HAP-1 (cell line): ENCODE measurements at regions of chr20 and their contacts with region 1.

Region 1: GRCh38 chr20:9616833-9617489 is 102.6 kb downstream of the LAMP5 start:
- DNase-seq: peak; percentile 68 to 69
- H3K4me3 ChIP-seq: no peak overlapping the region
- H3K4me1 ChIP-seq: no peaks in the 10 kb centered on the region
- H3K27me3 ChIP-seq: no peaks in the 10 kb centered on the region

Region 2: DNA sequence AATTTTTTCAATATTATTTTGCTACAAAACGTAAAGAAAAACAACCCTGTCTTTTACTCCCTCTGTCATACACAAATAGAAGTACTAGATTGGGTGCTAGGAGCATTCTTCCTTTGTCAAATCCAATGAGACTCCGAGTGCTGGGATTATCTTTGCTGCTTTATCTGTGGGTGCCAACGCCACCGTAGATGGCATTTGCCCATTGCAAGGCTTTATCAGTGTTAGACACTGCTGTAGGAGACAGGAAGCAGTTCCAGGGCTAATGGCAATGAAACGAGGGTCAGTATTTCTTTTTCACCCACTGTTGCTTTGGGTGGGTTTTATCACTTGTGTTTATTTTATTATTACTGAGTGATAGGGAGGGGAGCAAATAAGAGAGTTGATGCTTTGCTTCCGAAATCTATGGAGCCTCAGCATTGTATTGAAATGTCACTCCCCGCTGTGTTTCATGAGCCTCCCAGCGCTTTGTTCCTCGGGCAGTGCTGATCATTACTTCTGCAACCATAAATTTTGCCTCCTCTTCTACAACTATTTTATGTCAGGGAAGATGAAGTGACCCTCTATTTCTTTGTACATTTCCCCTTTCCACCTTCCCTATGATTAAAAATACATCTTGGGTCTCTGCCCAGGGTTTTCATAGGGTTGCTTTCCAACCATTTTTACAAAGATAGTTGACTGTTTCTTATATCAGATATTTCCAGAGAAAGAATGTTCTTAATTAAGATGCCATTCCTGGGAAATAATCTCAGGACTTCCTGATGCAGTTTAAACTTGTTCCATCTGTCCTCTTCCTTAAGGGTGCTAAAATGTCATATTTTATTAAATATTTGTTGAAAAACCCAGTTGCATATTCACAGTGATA is 189.3 kb before region 1 on chr20:
- in situ Hi-C with region 1: no loop called
- DNase-seq: no peak
- H3K4me3 ChIP-seq: no peak overlapping the region
- H3K4me1 ChIP-seq: no peaks in the 10 kb centered on the region
- H3K27me3 ChIP-seq: no peaks in the 10 kb centered on the region

Region 3: DNA sequence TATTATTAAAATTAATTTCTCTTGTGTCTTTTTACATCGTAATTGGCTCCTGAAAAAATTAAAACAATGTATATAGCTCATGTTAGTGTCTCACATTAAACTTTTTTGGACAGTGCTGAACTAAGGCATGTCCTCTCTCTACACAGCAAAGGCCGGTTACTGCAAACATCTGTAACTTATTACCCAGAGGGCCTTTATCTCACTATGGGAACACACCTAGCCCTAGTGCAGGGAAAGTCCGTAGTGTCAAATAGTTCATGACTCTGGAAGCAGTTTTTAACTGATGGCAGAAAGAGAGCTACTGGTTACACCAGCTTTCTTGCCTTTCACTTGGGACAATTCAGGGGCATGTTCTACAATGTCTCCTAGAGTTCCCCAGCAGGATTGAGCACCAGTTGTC is 139.7 kb after region 1 on chr20:
- in situ Hi-C with region 1: no loop called
- DNase-seq: no peak
- H3K4me3 ChIP-seq: no peak overlapping the region
- H3K4me1 ChIP-seq: no peaks in the 10 kb centered on the region
- H3K27me3 ChIP-seq: no peaks in the 10 kb centered on the region

Region 4: DNA sequence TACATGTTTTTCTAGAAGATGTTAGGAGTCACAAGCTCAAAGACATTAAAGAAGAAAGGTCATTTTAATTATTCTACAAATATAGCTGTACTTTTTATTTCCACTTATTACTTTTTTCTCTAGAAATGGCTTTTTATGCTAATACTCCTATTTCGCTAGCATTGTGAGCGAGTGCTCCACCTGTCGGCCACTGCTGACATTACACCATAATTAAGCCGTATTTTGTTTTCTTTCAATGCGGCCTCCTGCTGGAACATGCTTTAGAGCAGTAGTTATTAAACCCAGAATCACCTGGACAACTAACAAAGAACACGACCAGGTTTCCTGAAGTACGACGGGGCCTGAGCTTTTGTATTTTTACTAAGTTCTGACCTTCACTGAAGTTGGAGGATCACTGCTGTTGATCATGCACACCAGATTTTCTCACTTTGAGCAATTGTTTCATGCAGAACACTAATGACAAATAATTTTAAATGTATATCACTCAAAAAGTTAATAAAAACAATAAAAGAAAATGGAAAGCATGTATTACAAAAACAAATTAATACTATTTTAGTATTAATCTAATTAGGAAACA is 296.0 kb after region 1 on chr20:
- in situ Hi-C with region 1: loop called (anchors 25 kb)
- DNase-seq: peak; percentile 40 to 64
- H3K4me3 ChIP-seq: no peak overlapping the region
- H3K4me1 ChIP-seq: no peaks in the 10 kb centered on the region
- H3K27me3 ChIP-seq: no peaks in the 10 kb centered on the region

Region 5: GRCh38 chr20:10090588-10091166 is 473.7 kb after region 1 on chr20:
- in situ Hi-C with region 1: loop called (anchors 25 kb)
- DNase-seq: peak; percentile 45 to 57
- H3K4me3 ChIP-seq: no peak overlapping the region
- H3K4me1 ChIP-seq: no peaks in the 10 kb centered on the region
- H3K27me3 ChIP-seq: no peaks in the 10 kb centered on the region